Kidney (tissue), 22 donors: ENCODE measurements at regions of chr16 and their contacts with region 1.

Region 1: GRCh38 chr16:3112058-3112880 is at the start of gene ZNF205:
- DNase-seq: peak; percentile 84 to 92 (median 89)
- H3K4me3 ChIP-seq: peak within 1 kb of the TSS; percentile 48 to 81 (median 66)
- H3K27ac ChIP-seq: peak within 1 kb of the TSS; percentile 20 to 39
- H3K4me1 ChIP-seq: peaks cover 0 to 18% (median 14%) of the 10 kb centered on the region in 3 donors
- H3K27me3 ChIP-seq: no peaks in the 10 kb centered on the region
- CTCF ChIP-seq: no peak
- total RNA-seq, gene ZNF205: 12.7 TPM

Region 2: DNA sequence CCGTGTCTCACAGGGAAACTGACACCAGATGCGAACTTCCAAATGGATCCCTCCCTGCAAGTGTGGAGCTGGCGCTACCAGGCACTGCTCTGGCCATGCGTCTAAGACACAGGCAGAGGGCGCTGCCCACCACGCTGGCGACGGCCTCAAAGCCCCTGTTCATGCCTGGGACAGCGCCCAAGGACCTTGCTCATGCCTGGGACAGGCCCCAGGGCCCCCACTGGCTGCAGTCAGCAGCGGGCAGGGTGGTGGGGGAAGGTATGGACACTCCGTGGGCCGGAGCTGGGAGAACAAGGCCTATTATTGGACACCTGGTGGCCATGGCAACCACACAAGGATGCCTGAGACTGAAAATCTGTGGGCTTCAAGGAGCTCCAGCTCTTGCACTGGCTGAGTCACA is 273.3 kb before region 1 on chr16:
- intact Hi-C with region 1: no loop called
- DNase-seq: peak; percentile 69 to 87 (median 80)
- H3K4me3 ChIP-seq: no peak overlapping the region
- H3K27ac ChIP-seq: no peak overlapping the region
- H3K4me1 ChIP-seq: peaks cover 0 to 4% (median 0%) of the 10 kb centered on the region in 3 donors
- H3K27me3 ChIP-seq: no peaks in the 10 kb centered on the region
- CTCF ChIP-seq: peak; percentile 82

Region 3: DNA sequence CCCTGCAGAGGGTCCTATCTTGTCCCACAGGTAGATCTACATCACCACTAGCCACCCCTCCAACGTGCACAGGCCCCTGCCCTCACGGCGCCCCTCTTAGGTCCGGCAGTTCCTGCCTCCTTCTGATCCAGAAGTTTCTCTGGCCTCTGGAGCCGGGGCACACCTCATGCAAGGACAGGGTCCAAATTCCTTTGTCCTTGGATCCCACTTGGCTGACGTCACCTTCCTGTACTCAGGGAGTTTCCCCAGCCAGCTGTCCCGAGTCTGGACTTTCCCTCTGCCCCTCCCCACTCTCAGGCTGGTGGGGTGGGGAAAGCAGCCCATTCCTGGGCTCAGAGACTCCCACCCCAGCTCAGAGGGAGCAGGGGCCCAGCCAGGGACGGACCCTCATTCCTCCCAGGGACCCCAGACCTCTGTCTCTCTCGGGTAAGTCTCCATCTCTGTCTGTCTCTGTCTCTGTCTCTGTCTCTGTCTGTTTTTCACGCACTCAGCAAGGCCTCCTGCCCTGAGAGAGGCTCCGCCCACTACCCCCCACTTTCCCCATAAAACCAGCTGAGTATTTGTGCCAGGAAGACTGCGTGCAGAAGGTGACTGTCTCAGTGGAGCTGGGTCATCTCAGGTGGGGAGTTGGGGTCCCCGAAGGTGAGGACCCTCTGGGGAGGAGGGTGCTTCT is 47.1 kb before region 1 on chr16 and contains the start of gene IL32:
- intact Hi-C with region 1: loop called (anchors 10 kb)
- DNase-seq: peak; percentile 37 to 89 (median 65)
- H3K4me3 ChIP-seq: peak within 1 kb of the TSS in 2 of 3 donors; percentile 52 to 64
- H3K27ac ChIP-seq: peak within 1 kb of the TSS; percentile 81
- H3K4me1 ChIP-seq: peaks cover 0 to 18% (median 10%) of the 10 kb centered on the region in 3 donors
- H3K27me3 ChIP-seq: no peaks in the 10 kb centered on the region
- CTCF ChIP-seq: no peak
- total RNA-seq, gene IL32: 181 TPM